Colonic mucosa (tissue), 4 donors: ENCODE measurements at regions of chr2 and their contacts with region 1.

Region 1: DNA sequence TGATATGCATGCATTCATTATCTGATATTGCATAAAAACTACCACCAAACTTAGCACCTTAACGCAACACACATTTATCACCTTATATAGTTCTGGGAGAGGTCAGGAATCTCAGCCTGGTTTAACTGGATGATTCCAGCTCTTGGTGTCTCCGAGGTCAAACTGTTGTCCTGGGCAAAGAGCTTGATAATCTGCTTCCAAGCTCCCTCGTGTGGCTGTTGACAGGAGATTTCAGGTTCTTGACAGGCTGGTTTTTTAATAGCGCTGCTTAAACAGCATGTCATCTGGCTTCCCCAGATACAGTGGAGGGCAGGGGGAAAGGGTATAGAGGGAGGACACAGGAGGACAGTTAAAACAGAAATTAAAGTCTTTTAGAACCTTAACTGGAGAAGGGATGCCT is 785.0 kb downstream of the CNTNAP5 start:
- DNase-seq: peak; percentile 50
- H3K4me3 ChIP-seq: no peak overlapping the region
- H3K27ac ChIP-seq: no peak overlapping the region
- H3K4me1 ChIP-seq: no peaks in the 10 kb centered on the region
- H3K27me3 ChIP-seq: no peaks in the 10 kb centered on the region
- CTCF ChIP-seq: peak; percentile 35

Region 2: GRCh38 chr2:124027182-124027581 is 783.0 kb before region 1 on chr2:
- intact Hi-C with region 1: loop called (anchors 5 kb)
- DNase-seq: no peak
- H3K4me3 ChIP-seq: no peak overlapping the region
- H3K27ac ChIP-seq: no peak overlapping the region
- H3K4me1 ChIP-seq: no peaks in the 10 kb centered on the region
- H3K27me3 ChIP-seq: peaks cover 8% of the 10 kb centered on the region
- CTCF ChIP-seq: peak; percentile 39

Region 3: GRCh38 chr2:124898827-124899226 is 88.7 kb after region 1 on chr2:
- intact Hi-C with region 1: no loop called
- DNase-seq: no peak
- H3K4me3 ChIP-seq: no peak overlapping the region
- H3K27ac ChIP-seq: no peak overlapping the region
- H3K4me1 ChIP-seq: no peaks in the 10 kb centered on the region
- H3K27me3 ChIP-seq: no peaks in the 10 kb centered on the region
- CTCF ChIP-seq: no peak